Naive thymus-derived CD4-positive, alpha-beta T cell (primary cell): ENCODE measurements at regions of chrX and their contacts with region 1.

Region 1: GRCh38 chrX:136780763-136781162 is at the start of gene ARHGEF6:
- DNase-seq: peak in 6 of 9 donors; percentile 28 to 52 (median 46)
- ATAC-seq: peak; percentile 72
- H3K4me3 ChIP-seq: peak within 1 kb of the TSS; percentile 77
- H3K4me3 Mint-ChIP-seq: peak within 1 kb of the TSS; percentile 85 to 96 (median 93)
- H3K27ac ChIP-seq: peak within 1 kb of the TSS; percentile 80
- H3K27ac Mint-ChIP-seq: peak within 1 kb of the TSS; percentile 84 to 97 (median 96)
- H3K4me1 ChIP-seq: peaks cover 7 to 29% of the 10 kb centered on the region in 2 donors
- H3K4me1 Mint-ChIP-seq: peaks cover 32 to 73% (median 64%) of the 10 kb centered on the region in 7 donors
- H3K27me3 ChIP-seq: no peaks in the 10 kb centered on the region
- H3K27me3 Mint-ChIP-seq: no peaks in the 10 kb centered on the region
- total RNA-seq, gene ARHGEF6: 66.1 to 102 (median 81.5) TPM

Region 2: DNA sequence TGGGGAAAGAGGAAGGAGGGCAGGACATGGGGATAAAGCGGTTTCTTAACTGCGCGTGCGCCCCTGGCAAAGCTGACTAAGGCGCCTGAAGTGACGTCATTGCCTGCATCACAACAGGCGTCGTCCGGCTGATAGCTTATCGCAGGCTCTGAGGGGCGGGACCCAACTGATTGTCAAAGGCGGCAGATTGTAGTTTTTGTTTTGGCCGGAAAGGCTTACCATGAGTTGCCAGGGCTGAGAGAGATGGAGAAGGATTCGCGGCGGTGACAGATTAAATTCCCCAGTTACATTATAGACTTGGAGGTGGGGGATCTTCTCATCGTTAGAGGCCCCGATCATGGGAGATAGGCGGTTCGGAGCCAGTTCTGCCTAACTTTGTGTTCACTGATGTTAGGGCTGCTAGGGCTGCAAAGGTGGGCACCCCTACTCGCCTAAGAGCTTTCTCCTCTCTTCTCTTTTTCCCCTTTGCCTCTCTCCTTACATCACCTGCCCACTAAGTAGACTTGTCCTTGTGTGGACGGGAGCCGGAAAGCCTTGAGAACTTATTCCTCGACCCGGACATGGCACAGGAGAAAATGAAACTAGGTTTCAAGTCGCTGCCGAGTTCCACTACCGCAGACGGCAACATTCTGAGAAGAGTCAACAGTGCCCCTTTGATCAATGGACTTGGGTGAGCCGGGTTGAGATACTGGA is 1973.6 kb before region 1 on chrX:
- CTCF ChIA-PET with region 1: no interaction called
- POLR2A ChIA-PET with region 1: no interaction called
- intact Hi-C with region 1: loop called in 1 of 2 experiments (anchors 10 kb)
- DNase-seq: peak; percentile 56 to 91 (median 85)
- ATAC-seq: peak; percentile 93
- H3K4me3 ChIP-seq: peak overlapping the region; percentile 79
- H3K4me3 Mint-ChIP-seq: peak overlapping the region; percentile 89 to 99 (median 95)
- H3K27ac ChIP-seq: peak overlapping the region; percentile 94
- H3K27ac Mint-ChIP-seq: peak overlapping the region; percentile 87 to 100 (median 97)
- H3K4me1 ChIP-seq: peaks cover 4% of the 10 kb centered on the region in 2 donors
- H3K4me1 Mint-ChIP-seq: peaks cover 8 to 39% (median 27%) of the 10 kb centered on the region in 7 donors
- H3K27me3 ChIP-seq: no peaks in the 10 kb centered on the region
- H3K27me3 Mint-ChIP-seq: peaks cover 0 to 2% (median 0%) of the 10 kb centered on the region in 5 donors

Region 3: GRCh38 chrX:135437867-135438733 is 1342.7 kb before region 1 on chrX:
- CTCF ChIA-PET with region 1: no interaction called
- POLR2A ChIA-PET with region 1: no interaction called
- intact Hi-C with region 1: no loop called
- DNase-seq: no peak
- ATAC-seq: no peak
- H3K4me3 ChIP-seq: no peak overlapping the region
- H3K4me3 Mint-ChIP-seq: no peak overlapping the region
- H3K27ac ChIP-seq: no peak overlapping the region
- H3K27ac Mint-ChIP-seq: no peak overlapping the region
- H3K4me1 ChIP-seq: no peaks in the 10 kb centered on the region
- H3K4me1 Mint-ChIP-seq: no peaks in the 10 kb centered on the region
- H3K27me3 ChIP-seq: no peaks in the 10 kb centered on the region
- H3K27me3 Mint-ChIP-seq: peaks cover 0 to 13% (median 0%) of the 10 kb centered on the region in 5 donors

Region 4: DNA sequence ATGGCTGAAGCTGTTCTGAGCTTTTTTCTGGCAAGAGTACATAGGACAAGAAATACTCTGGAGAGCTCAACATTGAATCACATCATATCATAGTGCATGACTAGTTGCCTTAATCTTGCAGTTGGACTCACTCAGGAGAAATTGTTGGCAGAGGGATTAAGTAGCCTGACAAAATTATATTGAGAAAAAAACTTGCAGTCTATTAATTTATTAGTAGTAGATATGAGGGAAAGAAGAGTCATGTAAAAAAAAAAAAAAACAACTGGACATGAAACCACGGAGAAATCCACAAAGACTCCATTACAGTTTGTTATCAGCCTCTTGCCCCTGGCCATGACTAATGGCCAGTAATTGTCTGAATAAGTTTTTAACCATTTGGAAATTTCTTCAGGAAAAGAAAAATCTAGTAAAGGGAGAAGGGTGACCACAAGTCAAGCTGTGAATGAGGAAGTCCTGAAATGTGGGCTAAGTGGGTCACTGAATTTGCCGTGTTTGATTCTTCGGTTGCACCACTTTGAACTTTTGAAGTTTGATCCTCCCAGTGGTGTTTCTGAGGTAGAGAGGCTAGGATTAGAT is 587.8 kb before region 1 on chrX:
- CTCF ChIA-PET with region 1: no interaction called
- POLR2A ChIA-PET with region 1: no interaction called
- intact Hi-C with region 1: no loop called
- DNase-seq: no peak
- ATAC-seq: no peak
- H3K4me3 ChIP-seq: no peak overlapping the region
- H3K4me3 Mint-ChIP-seq: peak overlapping the region in 8 of 10 donors; percentile 26 to 90 (median 66)
- H3K27ac ChIP-seq: no peak overlapping the region
- H3K27ac Mint-ChIP-seq: peak overlapping the region in 4 of 9 donors; percentile 2 to 90 (median 73)
- H3K4me1 ChIP-seq: peaks cover 11 to 24% of the 10 kb centered on the region in 2 donors
- H3K4me1 Mint-ChIP-seq: peaks cover 11 to 52% (median 36%) of the 10 kb centered on the region in 7 donors
- H3K27me3 ChIP-seq: no peaks in the 10 kb centered on the region
- H3K27me3 Mint-ChIP-seq: no peaks in the 10 kb centered on the region

Region 5: GRCh38 chrX:136588041-136588788 is 192.5 kb before region 1 on chrX:
- CTCF ChIA-PET with region 1: no interaction called
- POLR2A ChIA-PET with region 1: no interaction called
- intact Hi-C with region 1: no loop called
- DNase-seq: peak in 3 of 9 donors; percentile 16 to 41 (median 33)
- ATAC-seq: peak; percentile 51
- H3K4me3 ChIP-seq: no peak overlapping the region
- H3K4me3 Mint-ChIP-seq: peak overlapping the region in 9 of 10 donors; percentile 26 to 80 (median 70)
- H3K27ac ChIP-seq: peak overlapping the region; percentile 63
- H3K27ac Mint-ChIP-seq: peak overlapping the region; percentile 88 to 98 (median 95)
- H3K4me1 ChIP-seq: peaks cover 43 to 44% of the 10 kb centered on the region in 2 donors
- H3K4me1 Mint-ChIP-seq: peaks cover 12 to 52% (median 50%) of the 10 kb centered on the region in 7 donors
- H3K27me3 ChIP-seq: no peaks in the 10 kb centered on the region
- H3K27me3 Mint-ChIP-seq: no peaks in the 10 kb centered on the region

Region 6: DNA sequence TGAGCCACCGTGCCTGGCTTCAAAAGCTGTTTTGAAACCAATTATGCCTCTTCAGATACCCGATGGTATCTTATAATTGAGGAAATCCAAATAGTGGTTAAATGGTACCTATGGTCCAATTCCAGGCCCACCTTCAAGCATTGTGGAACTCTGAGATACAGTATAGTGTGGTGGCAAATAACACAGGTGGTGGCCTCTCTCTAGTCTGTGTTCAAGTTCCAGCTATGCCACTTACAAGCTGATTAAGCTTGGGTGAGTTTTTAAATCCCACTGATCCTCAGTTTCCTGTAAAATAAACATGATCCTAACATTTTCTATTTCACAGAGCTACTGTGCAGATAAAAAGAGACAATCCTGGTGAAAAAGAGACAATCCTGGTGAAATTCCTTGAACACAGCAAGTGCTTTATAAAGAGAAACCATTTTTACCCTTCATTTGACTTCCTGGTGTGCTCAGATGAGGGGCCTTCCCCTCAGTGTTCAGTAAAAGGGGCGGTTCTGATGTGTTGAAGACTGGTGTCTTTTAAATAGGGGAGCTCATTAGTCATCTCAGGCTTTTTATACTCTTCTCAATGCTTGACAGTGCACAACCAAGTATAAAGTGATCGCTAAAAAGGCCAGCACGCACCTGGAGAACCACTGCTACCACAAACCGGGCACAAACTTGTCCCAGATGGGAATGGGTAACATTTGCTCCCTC is 163.6 kb before region 1 on chrX:
- CTCF ChIA-PET with region 1: no interaction called
- POLR2A ChIA-PET with region 1: no interaction called
- intact Hi-C with region 1: no loop called
- DNase-seq: peak in 6 of 9 donors; percentile 22 to 60 (median 34)
- ATAC-seq: peak; percentile 85
- H3K4me3 ChIP-seq: peak overlapping the region; percentile 45
- H3K4me3 Mint-ChIP-seq: peak overlapping the region; percentile 30 to 73 (median 64)
- H3K27ac ChIP-seq: peak overlapping the region; percentile 60
- H3K27ac Mint-ChIP-seq: peak overlapping the region; percentile 63 to 93 (median 87)
- H3K4me1 ChIP-seq: peaks cover 18 to 50% of the 10 kb centered on the region in 2 donors
- H3K4me1 Mint-ChIP-seq: peaks cover 5 to 75% (median 64%) of the 10 kb centered on the region in 7 donors
- H3K27me3 ChIP-seq: no peaks in the 10 kb centered on the region
- H3K27me3 Mint-ChIP-seq: no peaks in the 10 kb centered on the region

Region 7: GRCh38 chrX:136747003-136747986 is 33.5 kb before region 1 on chrX:
- CTCF ChIA-PET with region 1: no interaction called
- POLR2A ChIA-PET with region 1: interaction called, 3 read pairs
- intact Hi-C with region 1: loop called in 1 of 2 experiments (anchors 5 kb)
- DNase-seq: no peak
- ATAC-seq: peak; percentile 61
- H3K4me3 ChIP-seq: no peak overlapping the region
- H3K4me3 Mint-ChIP-seq: peak overlapping the region in 9 of 10 donors; percentile 28 to 74 (median 52)
- H3K27ac ChIP-seq: no peak overlapping the region
- H3K27ac Mint-ChIP-seq: peak overlapping the region; percentile 6 to 91 (median 78)
- H3K4me1 ChIP-seq: peaks cover 16 to 40% of the 10 kb centered on the region in 2 donors
- H3K4me1 Mint-ChIP-seq: peaks cover 42 to 89% (median 86%) of the 10 kb centered on the region in 7 donors
- H3K27me3 ChIP-seq: no peaks in the 10 kb centered on the region
- H3K27me3 Mint-ChIP-seq: no peaks in the 10 kb centered on the region

Region 8: DNA sequence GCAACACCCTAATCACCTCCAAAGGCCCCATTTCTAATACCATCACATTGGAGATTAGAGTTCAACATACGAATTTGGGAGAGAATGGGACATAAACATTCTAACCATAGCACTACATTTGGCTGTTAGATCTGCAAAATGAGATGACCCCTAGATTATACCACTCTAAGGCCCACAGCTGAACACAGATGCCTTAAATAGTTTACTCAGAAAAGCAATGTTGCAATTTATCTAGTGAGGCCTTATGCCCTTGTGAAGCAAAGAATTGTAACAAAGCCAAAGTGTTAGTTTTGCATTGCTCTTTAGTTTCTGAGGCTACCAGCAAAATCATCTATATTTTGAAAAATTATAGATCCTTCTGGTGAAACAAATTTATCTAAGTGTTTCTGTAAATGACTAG is 31.5 kb after region 1 on chrX:
- CTCF ChIA-PET with region 1: no interaction called
- POLR2A ChIA-PET with region 1: interaction called, 3 read pairs
- intact Hi-C with region 1: loop called in 1 of 2 experiments (anchors 5 kb)
- DNase-seq: no peak
- ATAC-seq: no peak
- H3K4me3 ChIP-seq: no peak overlapping the region
- H3K4me3 Mint-ChIP-seq: no peak overlapping the region
- H3K27ac ChIP-seq: no peak overlapping the region
- H3K27ac Mint-ChIP-seq: no peak overlapping the region
- H3K4me1 ChIP-seq: peaks cover 0 to 7% of the 10 kb centered on the region in 2 donors
- H3K4me1 Mint-ChIP-seq: peaks cover 0 to 22% (median 6%) of the 10 kb centered on the region in 7 donors
- H3K27me3 ChIP-seq: no peaks in the 10 kb centered on the region
- H3K27me3 Mint-ChIP-seq: no peaks in the 10 kb centered on the region

Region 9: DNA sequence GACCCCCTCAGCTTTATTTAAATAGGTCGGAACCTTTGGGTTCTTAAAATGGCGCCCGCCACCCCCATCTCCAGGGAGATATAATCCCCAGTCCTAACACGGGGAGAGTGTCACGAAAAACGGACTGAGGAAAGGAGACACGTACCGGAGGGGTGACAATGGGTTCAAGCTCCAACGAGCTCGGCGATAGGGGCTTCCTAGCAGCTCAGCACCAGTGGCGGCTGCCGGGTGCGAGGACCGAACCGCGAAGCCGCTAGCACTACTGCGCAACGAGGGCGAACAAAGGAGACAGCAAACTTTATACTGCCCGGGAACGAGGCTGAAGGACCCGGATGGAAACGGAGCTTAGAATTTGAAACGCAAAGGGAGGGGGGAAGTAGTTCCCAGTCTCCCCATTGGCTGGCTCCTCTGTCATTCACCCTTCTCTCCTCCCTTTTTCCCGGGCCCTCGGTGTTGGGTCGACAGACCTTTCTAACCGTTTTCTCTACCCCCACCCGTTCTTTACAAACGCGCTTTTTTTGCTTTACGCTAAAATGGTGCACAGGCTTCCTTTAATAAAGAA is 99.8 kb after region 1 on chrX and contains the start of gene RBMX:
- CTCF ChIA-PET with region 1: no interaction called
- POLR2A ChIA-PET with region 1: interaction called, 46 read pairs
- intact Hi-C with region 1: loop called (anchors 1 kb)
- DNase-seq: peak; percentile 75 to 92 (median 89)
- ATAC-seq: peak; percentile 94
- H3K4me3 ChIP-seq: peak within 1 kb of the TSS; percentile 87
- H3K4me3 Mint-ChIP-seq: peak within 1 kb of the TSS; percentile 91 to 99 (median 97)
- H3K27ac ChIP-seq: peak within 1 kb of the TSS; percentile 95
- H3K27ac Mint-ChIP-seq: peak within 1 kb of the TSS; percentile 96 to 100 (median 99)
- H3K4me1 ChIP-seq: peaks cover 4 to 9% of the 10 kb centered on the region in 2 donors
- H3K4me1 Mint-ChIP-seq: peaks cover 0 to 33% (median 25%) of the 10 kb centered on the region in 7 donors
- H3K27me3 ChIP-seq: no peaks in the 10 kb centered on the region
- H3K27me3 Mint-ChIP-seq: no peaks in the 10 kb centered on the region
- total RNA-seq, gene RBMX: 204 to 263 (median 259) TPM